Activated CD8-positive, alpha-beta T cell treated with anti-CD3 and anti-CD28 coated beads, Interleukin-2, amount 10 ng/mL, durations not matched to agents 7 days and 5 days (primary cell): ENCODE measurements at regions of chr6 and their contacts with region 1.

Region 1: GRCh38 chr6:149513915-149514314 is 29.1 kb upstream of the ZC3H12D start:
- DNase-seq: no peak
- ATAC-seq: no peak
- H3K4me3 Mint-ChIP-seq: no peak overlapping the region
- H3K27ac Mint-ChIP-seq: no peak overlapping the region
- H3K4me1 Mint-ChIP-seq: peaks cover 10% of the 10 kb centered on the region
- H3K27me3 Mint-ChIP-seq: no peaks in the 10 kb centered on the region

Region 2: GRCh38 chr6:149028767-149029405 is 485.0 kb before region 1 on chr6:
- CTCF ChIA-PET with region 1: interaction called, 25 read pairs
- POLR2A ChIA-PET with region 1: no interaction called
- DNase-seq: peak; percentile 87
- ATAC-seq: peak; percentile 62
- H3K4me3 Mint-ChIP-seq: no peak overlapping the region
- H3K27ac Mint-ChIP-seq: no peak overlapping the region
- H3K4me1 Mint-ChIP-seq: peaks cover 53% of the 10 kb centered on the region
- H3K27me3 Mint-ChIP-seq: no peaks in the 10 kb centered on the region

Region 3: DNA sequence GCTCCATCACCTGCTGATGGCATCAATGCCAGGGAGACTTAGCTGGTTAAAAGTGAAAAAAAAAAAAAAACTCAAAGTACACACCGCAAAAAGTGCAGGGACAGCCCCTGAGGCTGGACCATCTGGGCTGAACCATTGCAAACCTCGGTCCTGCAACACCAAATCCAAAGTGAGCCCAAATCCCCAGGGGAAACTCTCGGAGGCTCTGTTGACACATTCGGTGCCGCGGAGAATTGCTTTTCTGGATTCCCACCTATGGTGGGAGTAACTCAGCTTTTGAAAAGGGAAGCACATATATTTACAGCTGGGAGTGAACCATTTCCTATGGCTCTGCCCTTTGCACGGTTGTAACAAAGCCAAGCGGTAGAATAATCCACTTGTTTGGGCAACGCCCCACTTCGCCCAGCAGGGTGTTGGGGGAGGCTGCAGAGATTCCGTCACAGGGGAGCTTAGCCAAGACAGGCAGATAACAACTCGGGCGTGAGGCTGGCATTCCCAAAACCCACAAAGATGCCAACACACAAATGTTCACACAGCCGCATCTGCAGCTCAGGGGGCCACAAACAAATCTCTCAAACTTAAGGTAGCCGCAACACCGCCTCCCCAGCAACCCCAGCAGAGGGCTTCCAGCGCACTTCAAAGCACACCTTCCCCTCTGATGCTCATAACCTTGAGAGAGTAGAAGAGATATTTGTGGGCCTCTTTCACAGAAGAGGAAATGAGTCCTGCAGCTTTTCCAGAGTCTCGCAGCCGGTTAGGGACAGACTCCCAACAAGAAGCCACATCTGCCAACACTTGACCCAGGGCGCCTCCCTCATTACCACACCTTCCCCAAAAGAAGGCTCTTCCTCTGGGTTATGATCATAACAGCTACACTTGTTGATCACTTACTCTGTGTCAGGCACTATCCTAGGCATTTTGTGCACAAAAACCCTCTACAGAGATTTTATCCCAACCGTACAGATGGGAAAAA is 40.5 kb before region 1 on chr6:
- CTCF ChIA-PET with region 1: interaction called, 28 read pairs
- POLR2A ChIA-PET with region 1: interaction called, 4 read pairs
- DNase-seq: no peak
- ATAC-seq: no peak
- H3K4me3 Mint-ChIP-seq: no peak overlapping the region
- H3K27ac Mint-ChIP-seq: no peak overlapping the region
- H3K4me1 Mint-ChIP-seq: peaks cover 32% of the 10 kb centered on the region
- H3K27me3 Mint-ChIP-seq: no peaks in the 10 kb centered on the region

Region 4: DNA sequence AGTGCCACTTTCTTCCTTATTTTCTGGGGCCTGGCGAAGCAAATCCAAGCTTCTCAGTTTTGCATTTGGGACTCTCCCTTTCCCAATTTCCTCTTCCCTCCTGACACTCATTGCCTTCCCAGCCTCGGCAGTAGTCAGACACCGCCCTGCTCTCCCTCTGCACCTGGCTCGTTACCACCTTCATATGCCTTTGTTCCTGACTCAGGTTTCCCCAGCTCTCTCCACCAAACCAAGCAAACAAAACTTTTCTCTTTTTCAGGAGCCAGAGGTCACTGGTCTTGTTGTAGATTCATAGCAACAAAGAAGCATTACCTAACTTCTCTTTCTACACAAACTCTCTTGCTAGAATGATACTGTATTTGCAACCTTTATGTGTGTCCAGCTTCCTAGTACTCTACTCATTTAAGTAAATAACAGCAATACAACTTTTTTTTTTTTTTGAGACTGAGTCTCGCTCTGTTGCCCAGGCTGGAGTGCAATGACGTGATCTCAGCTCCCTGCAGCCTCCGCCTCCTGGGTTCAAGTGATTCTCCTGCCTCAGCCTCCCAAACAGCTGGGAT is 20.1 kb before region 1 on chr6:
- CTCF ChIA-PET with region 1: interaction called, 31 read pairs
- POLR2A ChIA-PET with region 1: interaction called, 6 read pairs
- DNase-seq: no peak
- ATAC-seq: no peak
- H3K4me3 Mint-ChIP-seq: no peak overlapping the region
- H3K27ac Mint-ChIP-seq: no peak overlapping the region
- H3K4me1 Mint-ChIP-seq: peaks cover 46% of the 10 kb centered on the region
- H3K27me3 Mint-ChIP-seq: no peaks in the 10 kb centered on the region

Region 5: DNA sequence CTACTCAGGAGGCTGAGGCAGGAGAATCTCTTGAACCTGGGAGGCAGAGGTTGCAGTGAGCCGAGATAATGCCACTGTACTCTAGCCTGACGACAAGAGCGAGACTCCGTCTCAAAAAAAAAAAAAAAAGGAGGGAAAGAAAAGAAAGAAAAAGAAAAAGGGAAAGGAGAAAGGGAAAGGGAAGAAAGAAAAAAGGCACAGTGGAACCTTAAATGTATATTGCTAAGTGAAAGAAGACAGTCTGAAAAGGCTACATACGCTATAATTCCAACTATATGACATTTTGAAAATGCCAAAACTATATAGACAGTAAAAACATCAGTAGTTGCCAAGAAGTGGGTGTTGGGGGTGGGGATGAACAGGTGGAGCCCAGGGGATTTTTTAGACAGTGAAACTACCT is 15.7 kb after region 1 on chr6:
- CTCF ChIA-PET with region 1: interaction called, 19 read pairs
- POLR2A ChIA-PET with region 1: no interaction called
- DNase-seq: no peak
- ATAC-seq: no peak
- H3K4me3 Mint-ChIP-seq: no peak overlapping the region
- H3K27ac Mint-ChIP-seq: no peak overlapping the region
- H3K4me1 Mint-ChIP-seq: no peaks in the 10 kb centered on the region
- H3K27me3 Mint-ChIP-seq: no peaks in the 10 kb centered on the region